GM12878 (cell line): ENCODE measurements at regions of chr1 and their contacts with region 1.

Region 1: GRCh38 chr1:206982216-206982615 is 12.0 kb upstream of the FCAMR start:
- DNase-seq: no peak
- ATAC-seq: peak; percentile 98
- H3K4me3 ChIP-seq: no peak overlapping the region
- H3K27ac ChIP-seq: no peak overlapping the region
- H3K4me1 ChIP-seq: no peaks in the 10 kb centered on the region
- H3K27me3 ChIP-seq: no peaks in the 10 kb centered on the region; a peak in 1 of 4 replicates
- CTCF ChIP-seq: peak; percentile 85 to 94 (median 92)
- EP300 ChIP-seq: no peak
- POLR2A ChIP-seq: no peak
- RAD21 ChIP-seq: peak; percentile 97

Region 2: GRCh38 chr1:206461602-206462455 is 520.4 kb before region 1 on chr1:
- CTCF ChIA-PET with region 1: interaction called, 14 read pairs
- POLR2A ChIA-PET with region 1: no interaction called
- RAD21 ChIA-PET with region 1: no interaction called
- SMC1A ChIA-PET with region 1: no interaction called
- in situ Hi-C with region 1: no loop called
- intact Hi-C with region 1: no loop called
- DNase-seq: no peak
- ATAC-seq: peak; percentile 90
- H3K4me3 ChIP-seq: no peak overlapping the region
- H3K27ac ChIP-seq: no peak overlapping the region
- H3K4me1 ChIP-seq: peaks cover 23% of the 10 kb centered on the region
- H3K27me3 ChIP-seq: no peaks in the 10 kb centered on the region
- CTCF ChIP-seq: peak; percentile 76 to 86 (median 84)
- EP300 ChIP-seq: no peak
- POLR2A ChIP-seq: no peak
- RAD21 ChIP-seq: peak; percentile 73

Region 3: GRCh38 chr1:206716870-206717673 is 265.1 kb before region 1 on chr1:
- CTCF ChIA-PET with region 1: interaction called, 13 read pairs
- POLR2A ChIA-PET with region 1: no interaction called
- RAD21 ChIA-PET with region 1: interaction called, 3 read pairs
- SMC1A ChIA-PET with region 1: interaction called, 4 read pairs
- in situ Hi-C with region 1: no loop called
- intact Hi-C with region 1: no loop called
- DNase-seq: peak; percentile 88
- ATAC-seq: peak; percentile 78
- H3K4me3 ChIP-seq: 0 out of 2 replicates have a peak overlapping the region, but pooled peaks have one; percentile 19
- H3K27ac ChIP-seq: peak overlapping the region; percentile 73
- H3K4me1 ChIP-seq: peaks cover 74% of the 10 kb centered on the region
- H3K27me3 ChIP-seq: no peaks in the 10 kb centered on the region
- CTCF ChIP-seq: no peak
- EP300 ChIP-seq: peak in 1 of 2 experiments; percentile 34; a peak in 1 of 4 replicates
- POLR2A ChIP-seq: no peak
- RAD21 ChIP-seq: no peak

Region 4: DNA sequence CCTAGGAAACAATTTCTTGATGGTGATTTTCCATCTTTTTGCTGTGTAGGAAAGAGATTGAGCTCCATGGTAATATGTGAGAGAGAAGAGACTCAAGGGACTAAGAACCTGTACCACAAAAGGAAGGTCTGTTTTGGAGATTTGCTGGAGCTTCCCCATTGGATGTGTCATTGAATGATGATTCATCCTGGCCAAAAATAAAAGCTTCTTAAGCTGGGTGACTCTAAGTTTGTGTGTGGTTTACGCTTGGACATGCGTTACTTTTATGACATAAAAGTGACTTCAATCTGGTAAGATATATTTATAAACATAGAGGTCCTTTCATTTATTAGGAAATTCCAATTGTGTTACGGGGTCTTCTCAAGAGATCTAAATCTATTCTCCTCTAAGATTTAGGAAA is 229.1 kb before region 1 on chr1:
- CTCF ChIA-PET with region 1: no interaction called
- POLR2A ChIA-PET with region 1: no interaction called
- RAD21 ChIA-PET with region 1: no interaction called
- SMC1A ChIA-PET with region 1: no interaction called
- in situ Hi-C with region 1: no loop called
- intact Hi-C with region 1: no loop called
- DNase-seq: no peak
- ATAC-seq: no peak
- H3K4me3 ChIP-seq: no peak overlapping the region
- H3K27ac ChIP-seq: no peak overlapping the region
- H3K4me1 ChIP-seq: no peaks in the 10 kb centered on the region
- H3K27me3 ChIP-seq: no peaks in the 10 kb centered on the region
- CTCF ChIP-seq: no peak
- EP300 ChIP-seq: no peak
- POLR2A ChIP-seq: no peak
- RAD21 ChIP-seq: no peak

Region 5: GRCh38 chr1:206814716-206815341 is 167.4 kb before region 1 on chr1:
- CTCF ChIA-PET with region 1: interaction called, 198 read pairs
- POLR2A ChIA-PET with region 1: no interaction called
- RAD21 ChIA-PET with region 1: interaction called, 79 read pairs
- SMC1A ChIA-PET with region 1: interaction called, 120 read pairs
- in situ Hi-C with region 1: loop called (anchors 5 kb)
- intact Hi-C with region 1: no loop called
- DNase-seq: no peak
- ATAC-seq: peak; percentile 42
- H3K4me3 ChIP-seq: no peak overlapping the region
- H3K27ac ChIP-seq: no peak overlapping the region; the same call in 1 of the 2 replicates
- H3K4me1 ChIP-seq: peaks cover 27% of the 10 kb centered on the region
- H3K27me3 ChIP-seq: no peaks in the 10 kb centered on the region
- CTCF ChIP-seq: no peak
- EP300 ChIP-seq: no peak
- POLR2A ChIP-seq: no peak
- RAD21 ChIP-seq: no peak

Region 6: GRCh38 chr1:206885341-206886060 is 96.7 kb before region 1 on chr1:
- CTCF ChIA-PET with region 1: interaction called, 15 read pairs
- POLR2A ChIA-PET with region 1: no interaction called
- RAD21 ChIA-PET with region 1: interaction called, 3 read pairs
- SMC1A ChIA-PET with region 1: interaction called, 4 read pairs
- in situ Hi-C with region 1: no loop called
- intact Hi-C with region 1: no loop called
- DNase-seq: no peak
- ATAC-seq: no peak
- H3K4me3 ChIP-seq: no peak overlapping the region
- H3K27ac ChIP-seq: no peak overlapping the region
- H3K4me1 ChIP-seq: no peaks in the 10 kb centered on the region
- H3K27me3 ChIP-seq: no peaks in the 10 kb centered on the region
- CTCF ChIP-seq: no peak
- EP300 ChIP-seq: no peak
- POLR2A ChIP-seq: no peak
- RAD21 ChIP-seq: no peak

Region 7: GRCh38 chr1:206955476-206956451 is 26.5 kb before region 1 on chr1:
- CTCF ChIA-PET with region 1: interaction called, 61 read pairs
- POLR2A ChIA-PET with region 1: no interaction called
- RAD21 ChIA-PET with region 1: interaction called, 7 read pairs
- SMC1A ChIA-PET with region 1: interaction called, 8 read pairs
- in situ Hi-C with region 1: no loop called
- intact Hi-C with region 1: no loop called
- DNase-seq: no peak
- ATAC-seq: peak; percentile 78
- H3K4me3 ChIP-seq: no peak overlapping the region
- H3K27ac ChIP-seq: peak overlapping the region; percentile 38
- H3K4me1 ChIP-seq: peaks cover 44% of the 10 kb centered on the region
- H3K27me3 ChIP-seq: no peaks in the 10 kb centered on the region
- CTCF ChIP-seq: no peak
- EP300 ChIP-seq: no peak
- POLR2A ChIP-seq: no peak
- RAD21 ChIP-seq: 0 out of 2 replicates have a peak, but pooled peaks have one; percentile 2

Region 8: DNA sequence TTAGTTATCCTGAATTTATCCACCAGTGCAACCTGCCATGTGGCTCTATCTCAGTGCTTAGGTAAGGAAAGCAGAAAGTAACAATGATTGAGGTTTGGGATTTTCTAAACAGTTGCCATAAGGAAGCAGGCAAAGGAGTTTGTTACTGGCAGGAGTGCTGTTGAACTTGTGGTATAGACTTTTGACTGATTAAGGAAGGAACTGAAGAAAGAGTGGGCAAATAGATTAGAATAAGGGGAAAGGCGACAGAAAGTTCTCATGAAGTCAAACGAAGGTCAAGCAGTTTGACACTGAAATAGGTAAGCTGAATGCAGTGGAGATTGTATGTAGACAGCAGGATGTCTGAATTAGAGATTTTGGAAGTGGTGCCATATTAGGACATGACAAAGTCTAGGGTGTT is 447.7 kb after region 1 on chr1:
- CTCF ChIA-PET with region 1: no interaction called
- POLR2A ChIA-PET with region 1: no interaction called
- RAD21 ChIA-PET with region 1: no interaction called
- SMC1A ChIA-PET with region 1: no interaction called
- in situ Hi-C with region 1: no loop called
- intact Hi-C with region 1: no loop called
- DNase-seq: peak; percentile 70
- ATAC-seq: peak; percentile 58
- H3K4me3 ChIP-seq: no peak overlapping the region
- H3K27ac ChIP-seq: peak overlapping the region; percentile 19
- H3K4me1 ChIP-seq: peaks cover 39% of the 10 kb centered on the region
- H3K27me3 ChIP-seq: no peaks in the 10 kb centered on the region
- CTCF ChIP-seq: no peak
- EP300 ChIP-seq: no peak
- POLR2A ChIP-seq: no peak
- RAD21 ChIP-seq: 0 out of 2 replicates have a peak, but pooled peaks have one; percentile 11